Left cardiac atrium (tissue), 4 donors: ENCODE measurements at regions of chr1 and their contacts with region 1.

Region 1: DNA sequence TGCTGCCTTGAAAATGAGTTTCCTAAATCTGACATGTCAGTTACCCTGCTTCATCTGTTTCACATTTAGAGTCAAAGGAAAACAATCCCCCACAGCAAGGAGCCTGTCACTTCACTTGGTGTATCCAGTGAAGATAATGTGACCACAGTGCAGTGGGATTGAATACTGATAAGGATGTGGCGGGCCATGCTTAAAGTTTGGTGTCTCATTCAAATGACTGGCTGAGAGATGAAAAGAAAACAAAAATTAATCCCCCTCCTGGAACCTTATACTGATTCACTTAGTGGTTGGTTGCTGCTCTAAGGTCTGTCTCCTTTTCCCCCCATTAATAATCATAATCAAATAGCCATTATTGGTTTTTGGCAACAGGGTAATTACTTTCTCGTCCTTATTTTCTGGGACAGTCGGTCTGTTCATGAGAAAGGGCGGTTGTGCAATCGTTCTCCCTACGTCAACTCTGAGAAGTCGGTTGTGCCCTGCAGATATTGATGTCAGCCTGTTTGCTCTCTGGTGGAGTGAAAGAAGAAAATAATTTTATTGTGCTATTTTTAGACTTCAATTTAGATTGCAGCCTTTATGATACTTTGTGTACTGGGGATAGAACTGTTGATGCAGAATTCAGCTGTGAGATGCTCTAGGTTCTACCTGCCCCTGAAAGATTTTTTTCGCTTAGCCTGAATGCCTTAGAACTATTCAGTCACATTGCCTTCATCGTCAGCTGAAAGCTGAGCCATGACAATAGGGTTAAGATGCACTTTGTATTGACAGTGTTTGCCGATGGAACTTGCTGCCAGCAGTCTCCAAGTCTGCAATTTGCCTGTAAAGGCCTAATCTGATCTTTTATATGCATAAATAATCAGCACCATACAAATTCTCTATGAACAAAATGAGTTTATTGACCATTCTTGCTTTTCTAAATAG is 360.3 kb downstream of the DISC1 start:
- DNase-seq: peak; percentile 39
- ATAC-seq: peak; percentile 20 to 55

Region 2: GRCh38 chr1:231931846-231932454 is 54.9 kb before region 1 on chr1:
- intact Hi-C with region 1: loop called in 1 of 2 experiments (anchors 10 kb)
- DNase-seq: no peak
- ATAC-seq: no peak